Aorta (tissue), 5 donors: ENCODE measurements at regions of chr9 and their contacts with region 1.

Region 1: DNA sequence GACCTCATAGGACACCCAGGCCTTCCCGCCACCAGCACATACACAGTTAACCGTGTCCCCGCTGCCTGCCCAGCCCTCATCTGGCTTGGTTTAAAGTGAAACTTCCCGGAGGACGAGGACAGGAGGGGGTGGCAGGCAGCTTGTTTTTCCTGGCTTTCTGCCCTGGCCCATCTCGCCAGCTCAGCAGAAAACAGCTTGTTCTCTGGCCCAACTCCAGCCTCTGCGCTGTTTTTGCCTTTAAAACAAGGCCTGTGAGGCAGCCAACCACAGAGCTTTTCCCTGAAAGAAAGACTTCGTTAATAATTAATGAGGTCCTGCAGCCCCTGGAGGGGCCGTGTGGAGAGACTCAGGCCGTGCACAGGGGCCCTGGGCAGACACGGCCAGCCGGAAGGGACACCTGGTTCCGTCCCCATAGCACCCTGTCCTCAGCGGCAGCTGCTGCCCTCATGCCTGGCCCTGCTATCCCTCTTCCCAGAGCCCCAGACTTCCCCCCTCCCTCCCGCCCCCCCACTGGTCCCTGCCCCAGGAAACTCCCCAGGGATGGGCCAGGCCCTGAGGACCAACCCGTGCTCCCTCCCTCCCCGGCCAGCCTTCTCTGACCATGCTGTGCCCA is 108.7 kb downstream of the RXRA start:
- DNase-seq: peak; percentile 97 to 98
- ATAC-seq: peak; percentile 86
- H3K4me3 ChIP-seq: no peak overlapping the region
- H3K27ac ChIP-seq: peak overlapping the region in 1 of 2 donors; percentile 38
- H3K4me1 ChIP-seq: no peaks in the 10 kb centered on the region
- H3K27me3 ChIP-seq: no peaks in the 10 kb centered on the region

Region 2: DNA sequence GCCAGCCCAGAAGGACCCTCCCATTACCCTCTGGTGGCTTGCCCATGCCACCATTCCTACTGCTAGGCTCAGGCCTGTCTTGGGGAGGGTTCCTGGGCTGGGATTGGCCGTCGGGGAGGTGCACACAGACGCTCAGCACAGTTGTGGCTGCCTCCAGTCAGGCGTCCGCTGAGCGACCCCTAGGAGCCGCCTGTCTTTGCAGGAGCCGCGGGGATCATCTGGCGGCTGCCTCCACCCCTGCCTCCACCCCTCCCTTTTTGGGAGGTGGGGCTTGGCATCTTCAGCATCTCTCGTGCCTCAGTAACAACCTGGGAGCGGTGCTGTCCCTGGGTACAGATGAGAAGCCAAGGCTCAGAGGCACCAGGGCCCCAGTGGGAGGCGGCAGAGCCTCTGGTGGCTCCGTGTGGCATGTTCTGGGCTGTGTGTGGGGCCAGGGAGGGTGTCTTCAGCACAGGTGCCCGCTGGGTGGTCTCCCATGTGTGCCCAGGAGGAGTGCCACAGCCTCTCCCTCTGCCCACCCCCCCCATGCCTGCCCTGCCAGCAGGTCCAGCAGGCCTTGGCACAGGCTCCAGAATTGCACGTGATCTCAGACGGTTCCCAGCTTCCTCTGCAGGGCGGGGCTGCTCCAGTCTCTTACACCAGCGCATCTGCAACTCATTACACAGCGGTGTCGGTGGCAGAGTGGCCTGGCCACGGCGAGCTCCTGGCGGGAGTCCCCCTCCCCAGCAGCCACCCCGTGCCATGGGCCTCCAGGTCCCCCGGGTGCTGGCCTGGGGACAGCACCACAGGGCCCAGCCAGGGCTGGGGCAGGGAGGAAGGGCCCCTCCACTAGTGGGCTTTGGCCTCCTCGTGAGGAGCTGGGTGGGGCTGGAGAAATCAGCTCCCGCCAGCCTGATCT is 69.0 kb before region 1 on chr9:
- intact Hi-C with region 1: loop called in 1 of 2 experiments (anchors 10 kb)
- DNase-seq: peak; percentile 94 to 95
- ATAC-seq: peak; percentile 84
- H3K4me3 ChIP-seq: no peak overlapping the region
- H3K27ac ChIP-seq: peak overlapping the region in 1 of 2 donors; percentile 2
- H3K4me1 ChIP-seq: no peaks in the 10 kb centered on the region
- H3K27me3 ChIP-seq: no peaks in the 10 kb centered on the region

Region 3: DNA sequence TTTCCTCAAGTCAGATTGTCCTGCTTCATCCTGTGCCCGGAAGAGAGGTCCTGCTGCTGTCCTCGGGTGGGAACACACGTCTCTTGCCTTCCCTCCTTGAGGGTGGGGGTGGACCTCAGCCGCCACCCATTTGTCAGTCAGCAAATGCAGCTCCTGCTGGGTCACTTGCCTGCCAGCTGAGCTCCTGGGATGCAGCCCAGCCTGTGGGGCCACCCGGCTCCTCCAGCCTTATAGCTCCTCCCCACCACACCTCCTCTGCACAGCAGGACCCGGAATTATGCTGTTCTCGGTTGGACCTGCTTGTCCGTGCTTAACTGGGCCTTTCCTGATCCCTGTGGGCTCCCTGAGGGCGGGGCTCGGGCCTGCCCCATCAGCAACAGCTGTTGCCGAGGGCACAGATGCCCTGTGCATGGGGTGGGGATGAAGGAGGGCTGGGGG is 56.1 kb before region 1 on chr9:
- intact Hi-C with region 1: loop called in 1 of 2 experiments (anchors 5 kb)
- DNase-seq: no peak
- ATAC-seq: no peak
- H3K4me3 ChIP-seq: no peak overlapping the region
- H3K27ac ChIP-seq: no peak overlapping the region
- H3K4me1 ChIP-seq: no peaks in the 10 kb centered on the region
- H3K27me3 ChIP-seq: no peaks in the 10 kb centered on the region

Region 4: DNA sequence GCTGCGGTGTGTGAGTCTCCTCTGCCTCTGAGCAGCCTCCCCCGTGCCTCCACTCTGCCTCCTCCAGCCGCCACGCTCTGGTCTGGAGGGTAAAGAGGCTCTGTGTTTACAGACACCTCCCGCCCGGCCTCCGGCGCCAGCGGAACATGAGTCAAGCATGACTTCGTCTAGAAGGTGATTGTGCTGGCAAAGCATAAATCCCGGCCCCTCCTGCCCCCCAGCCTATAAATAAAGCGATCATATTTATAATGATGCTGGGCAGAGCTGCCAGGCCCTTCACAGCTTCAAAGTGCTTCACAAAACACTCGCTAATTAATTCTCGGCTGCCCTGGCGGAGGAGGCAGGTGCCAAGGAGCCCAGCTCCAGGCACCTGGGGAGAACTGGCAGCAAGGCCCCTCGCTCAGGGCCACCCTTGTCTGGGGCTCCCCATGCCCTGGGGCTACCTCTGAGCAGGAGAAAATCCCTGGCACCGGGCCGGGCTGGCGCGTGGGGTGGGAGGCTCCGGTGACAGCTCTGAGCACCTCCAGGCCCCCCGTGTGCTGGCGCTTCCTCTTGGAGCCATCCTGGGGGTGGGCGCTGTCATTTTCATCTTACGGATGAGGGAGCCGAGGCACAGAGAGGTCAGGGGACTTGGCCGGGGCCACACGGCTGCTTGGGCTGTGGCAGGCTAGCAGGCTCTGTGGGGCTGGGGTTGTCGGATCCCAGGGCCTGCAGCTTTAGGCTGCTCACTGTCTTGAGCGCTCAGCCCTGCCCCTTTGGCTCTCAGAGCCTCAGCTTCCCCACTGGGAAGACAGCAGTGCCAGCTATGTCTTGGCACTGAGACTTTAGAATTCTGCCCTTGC is 20.9 kb before region 1 on chr9:
- intact Hi-C with region 1: loop called in 1 of 2 experiments (anchors 2 kb)
- DNase-seq: peak; percentile 83 to 90
- ATAC-seq: peak; percentile 13
- H3K4me3 ChIP-seq: no peak overlapping the region
- H3K27ac ChIP-seq: no peak overlapping the region
- H3K4me1 ChIP-seq: no peaks in the 10 kb centered on the region
- H3K27me3 ChIP-seq: no peaks in the 10 kb centered on the region

Region 5: GRCh38 chr9:134463293-134463692 is 28.3 kb after region 1 on chr9:
- intact Hi-C with region 1: no loop called
- DNase-seq: no peak
- ATAC-seq: no peak
- H3K4me3 ChIP-seq: no peak overlapping the region
- H3K27ac ChIP-seq: no peak overlapping the region
- H3K4me1 ChIP-seq: no peaks in the 10 kb centered on the region
- H3K27me3 ChIP-seq: no peaks in the 10 kb centered on the region

Region 6: GRCh38 chr9:134475011-134475790 is 40.2 kb after region 1 on chr9:
- intact Hi-C with region 1: no loop called
- DNase-seq: peak; percentile 89 to 90
- ATAC-seq: peak; percentile 59
- H3K4me3 ChIP-seq: no peak overlapping the region
- H3K27ac ChIP-seq: peak overlapping the region in 1 of 2 donors; percentile 45
- H3K4me1 ChIP-seq: peaks cover 0 to 4% of the 10 kb centered on the region in 2 donors
- H3K27me3 ChIP-seq: no peaks in the 10 kb centered on the region